ENCODE measurements at regions of chr5 and their contacts with region 1.

Region 1: DNA sequence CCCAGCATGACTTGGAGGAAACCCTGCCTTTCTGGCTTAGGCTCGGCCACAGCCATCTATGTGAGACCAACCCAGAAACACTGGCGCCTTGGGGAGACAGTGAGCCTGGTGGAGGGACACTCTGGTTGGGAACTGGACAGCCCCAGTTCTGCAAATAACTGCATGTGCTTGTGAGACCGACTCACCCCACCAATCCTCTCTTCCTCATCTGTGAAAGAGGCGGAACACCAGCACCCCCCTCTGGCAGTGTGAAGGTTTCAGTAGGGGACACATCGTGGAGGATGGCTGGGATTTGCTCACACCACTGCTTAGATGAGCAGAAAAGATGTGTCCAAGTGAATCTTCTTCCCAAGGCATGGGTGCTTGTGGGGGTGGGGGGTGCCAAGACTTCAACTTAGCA is 43.4 kb upstream of the N4BP3 start:
- DNase-seq: no peak
- ATAC-seq: peak in 1 of 2 donors; percentile 34

Region 2: DNA sequence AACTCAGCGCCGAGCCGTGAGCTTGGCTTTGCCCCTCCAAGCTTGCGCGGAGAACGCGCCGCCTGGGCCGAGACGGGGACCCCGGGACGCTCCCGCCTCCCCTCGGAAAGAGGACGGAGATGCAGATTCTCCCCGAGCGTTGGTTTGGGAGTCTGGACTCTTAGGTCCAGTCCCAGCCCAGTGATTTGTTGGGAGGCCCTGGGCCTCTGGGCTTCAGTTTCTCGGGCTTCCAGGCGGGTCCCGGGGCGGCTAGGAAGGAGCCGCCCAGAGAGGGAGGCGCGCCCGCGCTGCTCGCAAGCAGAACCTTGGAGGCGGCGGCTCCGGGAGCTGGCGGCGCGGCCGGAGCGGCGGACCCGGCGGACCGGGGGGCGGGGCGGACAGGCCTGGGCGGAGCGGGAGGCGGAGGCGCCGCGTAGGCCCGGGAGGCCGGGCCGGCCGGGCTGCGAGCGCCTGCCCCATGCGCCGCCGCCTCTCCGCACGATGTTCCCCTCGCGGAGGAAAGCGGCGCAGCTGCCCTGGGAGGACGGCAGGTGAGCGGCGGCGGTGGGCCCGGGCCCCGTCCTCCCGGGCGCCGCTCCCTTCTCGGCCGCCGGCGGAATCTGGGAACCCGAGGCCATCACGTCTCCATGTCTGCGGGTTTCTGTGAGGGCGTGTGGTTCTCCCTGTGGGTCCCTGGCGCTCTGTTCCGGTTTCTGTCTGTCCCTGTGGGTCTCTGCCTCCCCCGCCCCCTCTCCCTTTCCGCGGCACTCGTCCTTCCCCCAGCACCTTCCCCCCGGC is 470.0 kb before region 1 on chr5 and contains the start of gene B4GALT7:
- intact Hi-C with region 1: loop called in 1 of 2 experiments (anchors 10 kb)
- DNase-seq: peak; percentile 90
- ATAC-seq: peak; percentile 95 to 98
- total RNA-seq, gene B4GALT7: 14.5 to 20.4 TPM

Region 3: GRCh38 chr5:177973066-177973635 is 96.8 kb before region 1 on chr5:
- intact Hi-C with region 1: no loop called
- DNase-seq: no peak
- ATAC-seq: no peak

Region 4: DNA sequence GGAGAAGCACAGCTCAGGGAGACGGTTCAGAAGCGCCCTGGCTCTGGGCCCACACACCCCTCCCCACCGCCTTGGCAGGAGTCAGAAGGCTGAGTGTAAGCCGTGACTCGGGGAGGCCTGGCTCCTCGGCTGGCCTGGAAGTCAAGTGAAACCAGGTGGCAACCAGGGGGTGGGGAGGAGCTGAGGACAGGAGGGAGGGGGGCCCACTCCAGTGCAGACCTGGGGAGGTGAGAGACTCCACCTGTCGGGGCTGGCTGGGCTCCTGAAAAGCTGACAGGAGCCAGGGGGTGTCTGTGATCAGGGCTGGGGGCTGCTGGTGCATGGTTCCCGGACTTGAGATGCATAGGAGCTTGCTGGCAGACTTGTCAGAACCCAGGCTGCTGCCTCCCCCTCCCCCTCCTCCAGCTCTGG is 312.9 kb after region 1 on chr5:
- intact Hi-C with region 1: no loop called
- DNase-seq: peak; percentile 14
- ATAC-seq: no peak